Dendritic cell treated with granulocyte-macrophage colony-stimulating factor and Interleukin-4, amounts not matched to agents 40 ng/mL and 50 ng/mL, for 4 days (primary cell): ENCODE measurements at regions of chr15 and their contacts with region 1.

Region 1: GRCh38 chr15:30670056-30670455 is 44.1 kb downstream of the ARHGAP11B start:
- H3K4me3 Mint-ChIP-seq: no peak overlapping the region
- H3K27ac Mint-ChIP-seq: no peak overlapping the region
- H3K4me1 Mint-ChIP-seq: no peaks in the 10 kb centered on the region
- H3K27me3 Mint-ChIP-seq: no peaks in the 10 kb centered on the region

Region 2: GRCh38 chr15:29382862-29383261 is 1287.2 kb before region 1 on chr15:
- intact Hi-C with region 1: no loop called
- H3K4me3 Mint-ChIP-seq: no peak overlapping the region
- H3K27ac Mint-ChIP-seq: no peak overlapping the region
- H3K4me1 Mint-ChIP-seq: no peaks in the 10 kb centered on the region
- H3K27me3 Mint-ChIP-seq: no peaks in the 10 kb centered on the region

Region 3: GRCh38 chr15:30791239-30792175 is 121.5 kb after region 1 on chr15:
- intact Hi-C with region 1: no loop called
- H3K4me3 Mint-ChIP-seq: no peak overlapping the region
- H3K27ac Mint-ChIP-seq: no peak overlapping the region
- H3K4me1 Mint-ChIP-seq: no peaks in the 10 kb centered on the region
- H3K27me3 Mint-ChIP-seq: peaks cover 5% of the 10 kb centered on the region

Region 4: GRCh38 chr15:31098953-31099740 is 429.1 kb after region 1 on chr15:
- intact Hi-C with region 1: no loop called
- H3K4me3 Mint-ChIP-seq: peak overlapping the region; percentile 37
- H3K27ac Mint-ChIP-seq: peak overlapping the region; percentile 79
- H3K4me1 Mint-ChIP-seq: peaks cover 45% of the 10 kb centered on the region
- H3K27me3 Mint-ChIP-seq: no peaks in the 10 kb centered on the region

Region 5: DNA sequence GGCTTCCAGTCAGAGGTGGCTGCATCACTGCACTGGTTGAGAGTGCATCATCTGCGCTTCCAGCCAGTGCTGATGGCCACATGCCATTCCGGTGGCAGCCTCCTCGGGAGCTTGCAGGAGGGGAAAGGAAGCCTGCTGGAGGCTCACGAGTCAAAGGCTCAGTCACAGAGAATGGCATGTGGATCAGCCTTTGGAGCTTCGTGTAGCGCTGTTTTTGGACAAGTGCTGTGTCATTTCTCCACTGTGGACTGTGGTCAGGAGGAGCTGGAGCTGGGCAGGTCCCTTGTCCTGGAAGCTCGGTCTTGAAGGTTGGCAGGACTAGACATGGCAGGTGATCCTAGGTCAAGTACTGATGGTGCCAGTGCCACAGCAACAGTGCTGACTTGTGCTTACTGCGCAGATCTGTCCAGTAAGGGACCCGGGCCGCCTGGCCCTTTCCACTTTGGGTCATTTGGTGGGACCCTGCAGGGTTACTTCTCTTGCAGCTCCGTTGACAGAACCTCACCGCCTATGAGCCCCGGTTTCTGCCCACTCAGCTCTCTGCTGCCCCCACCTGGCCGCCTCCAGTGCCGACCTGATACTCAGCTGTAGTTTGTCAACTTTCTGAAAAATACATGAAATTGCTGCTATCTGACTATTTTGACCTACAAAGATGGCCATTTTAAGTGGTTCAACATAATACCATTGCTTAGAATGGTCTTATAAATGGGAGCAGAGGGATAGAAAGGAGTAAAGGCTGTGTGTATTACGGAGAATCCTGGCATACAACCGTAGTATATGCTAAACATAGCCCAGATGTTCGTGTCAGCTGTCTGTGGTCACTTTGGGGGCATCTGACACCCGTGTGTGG is 459.1 kb after region 1 on chr15:
- intact Hi-C with region 1: loop called (anchors 10 kb)
- H3K4me3 Mint-ChIP-seq: no peak overlapping the region
- H3K27ac Mint-ChIP-seq: no peak overlapping the region
- H3K4me1 Mint-ChIP-seq: no peaks in the 10 kb centered on the region
- H3K27me3 Mint-ChIP-seq: peaks cover 3% of the 10 kb centered on the region

Region 6: GRCh38 chr15:31197497-31198414 is 527.7 kb after region 1 on chr15:
- intact Hi-C with region 1: loop called (anchors 10 kb)
- H3K4me3 Mint-ChIP-seq: no peak overlapping the region
- H3K27ac Mint-ChIP-seq: no peak overlapping the region
- H3K4me1 Mint-ChIP-seq: peaks cover 36% of the 10 kb centered on the region
- H3K27me3 Mint-ChIP-seq: peaks cover 12% of the 10 kb centered on the region

Region 7: GRCh38 chr15:31488426-31489204 is 818.6 kb after region 1 on chr15:
- intact Hi-C with region 1: loop called (anchors 10 kb)
- H3K4me3 Mint-ChIP-seq: no peak overlapping the region
- H3K27ac Mint-ChIP-seq: peak overlapping the region; percentile 15
- H3K4me1 Mint-ChIP-seq: peaks cover 25% of the 10 kb centered on the region
- H3K27me3 Mint-ChIP-seq: peaks cover 45% of the 10 kb centered on the region